Gastrocnemius medialis (tissue), 4 donors: ENCODE measurements at regions of chr10 and their contacts with region 1.

Region 1: GRCh38 chr10:63588436-63589167 is 67.4 kb downstream of the REEP3 start:
- DNase-seq: no peak
- ATAC-seq: no peak
- H3K4me3 ChIP-seq: no peak overlapping the region
- H3K27ac ChIP-seq: no peak overlapping the region
- H3K4me1 ChIP-seq: peaks cover 37 to 41% of the 10 kb centered on the region in 2 donors
- H3K27me3 ChIP-seq: no peaks in the 10 kb centered on the region
- CTCF ChIP-seq: no peak
- POLR2A ChIP-seq: no peak

Region 2: DNA sequence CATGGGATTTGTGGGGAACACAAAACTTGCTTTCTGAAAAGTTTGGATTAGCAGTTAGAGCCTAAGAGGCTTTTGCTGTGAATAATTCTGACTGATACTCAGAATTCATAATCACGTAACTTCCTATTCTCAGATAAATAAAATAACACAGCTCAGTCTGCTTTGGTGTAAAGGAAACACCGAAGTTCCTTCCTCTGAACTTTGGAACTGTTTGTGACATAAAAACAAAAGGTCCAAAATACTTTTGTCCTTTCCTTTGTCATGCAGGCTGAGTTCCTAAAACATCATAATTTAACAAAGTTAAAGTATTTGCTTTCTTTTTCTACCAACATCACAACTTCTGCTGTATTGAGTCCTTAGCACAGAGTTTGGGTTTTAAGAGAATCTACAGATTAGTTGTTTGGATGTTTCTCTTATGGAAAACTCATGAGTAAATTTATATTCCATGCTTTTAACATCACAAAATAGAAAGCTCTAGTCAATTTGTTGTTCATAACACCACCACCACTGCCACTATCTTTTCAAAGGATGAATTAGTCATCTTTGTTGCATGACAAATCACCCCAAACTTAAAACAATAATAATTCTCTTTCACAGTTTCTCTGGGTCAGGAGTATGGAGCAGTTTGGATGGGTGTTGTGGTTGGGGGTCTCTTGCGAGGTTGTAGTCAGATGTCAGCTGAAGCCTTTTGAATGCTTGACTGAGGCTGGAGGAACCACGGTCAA is 56.0 kb after region 1 on chr10:
- in situ Hi-C with region 1: no loop called
- intact Hi-C with region 1: no loop called
- DNase-seq: no peak
- ATAC-seq: peak; percentile 60 to 66
- H3K4me3 ChIP-seq: no peak overlapping the region
- H3K27ac ChIP-seq: peak overlapping the region; percentile 73 to 80 (median 76)
- H3K4me1 ChIP-seq: peaks cover 0 to 16% of the 10 kb centered on the region in 2 donors
- H3K27me3 ChIP-seq: no peaks in the 10 kb centered on the region
- CTCF ChIP-seq: no peak
- POLR2A ChIP-seq: peak in 1 of 2 donors; percentile 38

Region 3: GRCh38 chr10:63700209-63700613 is 111.6 kb after region 1 on chr10:
- in situ Hi-C with region 1: no loop called
- intact Hi-C with region 1: loop called (anchors 5 kb)
- DNase-seq: peak; percentile 79 to 82
- ATAC-seq: peak; percentile 97 to 98
- H3K4me3 ChIP-seq: no peak overlapping the region
- H3K27ac ChIP-seq: peak overlapping the region; percentile 81 to 91 (median 85)
- H3K4me1 ChIP-seq: peaks cover 45 to 60% of the 10 kb centered on the region in 2 donors
- H3K27me3 ChIP-seq: no peaks in the 10 kb centered on the region
- CTCF ChIP-seq: no peak
- POLR2A ChIP-seq: no peak